ENCODE measurements at regions of chr14 and their contacts with region 1.

Region 1: GRCh38 chr14:21071225-21072030 is 1.3 kb downstream of the ARHGEF40 start:
- DNase-seq: peak; percentile 95
- H3K4me3 ChIP-seq: peak overlapping the region; percentile 81 to 89
- H3K27ac ChIP-seq: peak overlapping the region; percentile 98 to 99
- H3K4me1 ChIP-seq: peaks cover 22 to 37% of the 10 kb centered on the region in 2 experiments
- H3K27me3 ChIP-seq: no peaks in the 10 kb centered on the region
- CTCF ChIP-seq: no peak
- EP300 ChIP-seq: peak in 1 of 2 experiments; percentile 25; a peak in 1 of 4 replicates
- RAD21 ChIP-seq: 0 out of 2 replicates have a peak, but pooled peaks have one; percentile 2

Region 2: DNA sequence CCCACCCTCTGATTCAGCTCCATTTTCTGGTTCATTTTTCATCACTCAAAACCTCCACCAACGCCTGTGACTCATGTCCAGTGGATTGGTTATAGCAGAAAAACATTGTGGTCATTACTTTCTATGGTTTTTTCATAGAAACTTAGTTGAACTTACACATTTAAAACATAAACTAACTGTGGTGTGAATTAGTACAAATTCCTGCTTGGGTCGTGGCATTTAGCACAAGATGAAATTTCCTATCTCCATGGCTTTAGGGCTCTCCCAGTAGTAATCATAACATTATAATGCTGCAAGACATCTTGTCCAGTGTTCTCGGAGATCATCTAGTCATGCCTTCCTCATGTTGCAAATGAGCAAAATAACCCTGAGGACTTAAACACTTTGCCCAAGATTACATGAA is 22.2 kb before region 1 on chr14:
- CTCF ChIA-PET with region 1: interaction called, 14 read pairs
- POLR2A ChIA-PET with region 1: no interaction called
- DNase-seq: no peak
- H3K4me3 ChIP-seq: no peak overlapping the region
- H3K27ac ChIP-seq: no peak overlapping the region
- H3K4me1 ChIP-seq: peaks cover 0 to 4% of the 10 kb centered on the region in 2 experiments; a peak in 1 of 4 replicates
- H3K27me3 ChIP-seq: no peaks in the 10 kb centered on the region
- CTCF ChIP-seq: no peak
- EP300 ChIP-seq: no peak
- RAD21 ChIP-seq: no peak

Region 3: GRCh38 chr14:21084988-21085853 is 13.8 kb after region 1 on chr14:
- CTCF ChIA-PET with region 1: interaction called, 79 read pairs
- POLR2A ChIA-PET with region 1: interaction called, 11 read pairs
- DNase-seq: peak; percentile 15
- H3K4me3 ChIP-seq: no peak overlapping the region
- H3K27ac ChIP-seq: peak overlapping the region; percentile 29 to 89
- H3K4me1 ChIP-seq: peaks cover 9 to 24% of the 10 kb centered on the region in 2 experiments; a peak in 3 of 4 replicates
- H3K27me3 ChIP-seq: no peaks in the 10 kb centered on the region
- CTCF ChIP-seq: no peak
- EP300 ChIP-seq: no peak
- RAD21 ChIP-seq: no peak

Region 4: DNA sequence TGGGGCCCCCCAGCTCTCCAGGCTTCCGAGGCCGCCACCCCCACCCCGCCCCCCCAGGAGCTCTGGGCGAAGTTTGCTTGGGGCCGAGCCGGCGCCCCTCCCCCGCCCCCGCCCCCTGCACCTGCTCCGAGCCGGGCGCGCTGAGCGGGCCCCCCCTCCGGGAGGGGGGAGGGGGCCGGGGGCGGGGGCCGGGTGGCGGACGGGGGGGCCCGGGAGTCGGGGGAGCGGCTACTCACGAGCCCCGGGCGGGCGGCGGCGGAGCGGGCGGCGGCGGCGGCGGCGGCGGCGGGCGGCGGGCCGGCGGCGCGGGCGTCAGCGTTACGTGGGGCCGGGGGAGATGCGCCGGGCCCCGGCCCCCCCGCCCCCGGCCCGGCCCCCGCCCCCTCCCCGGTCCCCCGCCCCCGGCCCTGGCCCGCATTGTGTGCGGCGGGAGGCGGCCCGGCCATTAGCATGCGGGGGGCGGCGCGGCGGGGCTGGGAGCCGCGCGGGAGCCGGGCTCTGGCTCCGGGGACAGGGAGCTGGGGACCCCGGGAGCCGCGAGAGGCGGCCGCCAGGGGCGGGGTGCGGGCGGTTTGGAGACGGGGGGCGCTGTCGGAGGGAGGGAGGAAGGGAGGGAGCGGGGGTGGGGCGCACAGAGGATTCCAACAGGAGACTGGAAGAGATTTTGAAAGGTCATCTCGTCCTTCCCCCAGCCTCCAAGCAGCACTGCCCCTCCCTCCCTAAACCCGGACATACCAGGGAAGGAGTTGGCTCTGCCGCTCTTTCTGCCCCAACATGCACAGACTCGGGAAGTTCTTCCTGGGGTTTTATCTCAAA is 26.9 kb after region 1 on chr14 and contains the start of gene ZNF219:
- CTCF ChIA-PET with region 1: interaction called, 296 read pairs
- POLR2A ChIA-PET with region 1: interaction called, 19 read pairs
- DNase-seq: peak; percentile 89
- H3K4me3 ChIP-seq: peak within 1 kb of the TSS; percentile 68 to 76
- H3K27ac ChIP-seq: peak within 1 kb of the TSS; percentile 44 to 94; a peak in 3 of 4 replicates
- H3K4me1 ChIP-seq: peaks cover 36 to 37% of the 10 kb centered on the region in 2 experiments
- H3K27me3 ChIP-seq: no peaks in the 10 kb centered on the region
- CTCF ChIP-seq: peak; percentile 18; the same call in 1 of the 2 replicates
- EP300 ChIP-seq: no peak; a peak in 1 of 4 replicates
- RAD21 ChIP-seq: no peak
- polyA plus RNA-seq, gene ZNF219: 22.1 and 24.1 TPM in 2 replicates

Measured in SK-N-SH (cell line).